ENCODE measurements at regions of chr2 and their contacts with region 1.

Region 1: GRCh38 chr2:110677530-110678456 is at the start of gene BUB1:
- DNase-seq: peak; percentile 97
- H3K4me3 Mint-ChIP-seq: peak within 1 kb of the TSS; percentile 84
- H3K27ac Mint-ChIP-seq: peak within 1 kb of the TSS; percentile 93
- H3K4me1 Mint-ChIP-seq: peaks cover 22% of the 10 kb centered on the region
- H3K27me3 Mint-ChIP-seq: no peaks in the 10 kb centered on the region
- CTCF ChIP-seq: no peak
- total RNA-seq, gene BUB1: 23.0 and 25.5 TPM in 2 replicates

Region 2: DNA sequence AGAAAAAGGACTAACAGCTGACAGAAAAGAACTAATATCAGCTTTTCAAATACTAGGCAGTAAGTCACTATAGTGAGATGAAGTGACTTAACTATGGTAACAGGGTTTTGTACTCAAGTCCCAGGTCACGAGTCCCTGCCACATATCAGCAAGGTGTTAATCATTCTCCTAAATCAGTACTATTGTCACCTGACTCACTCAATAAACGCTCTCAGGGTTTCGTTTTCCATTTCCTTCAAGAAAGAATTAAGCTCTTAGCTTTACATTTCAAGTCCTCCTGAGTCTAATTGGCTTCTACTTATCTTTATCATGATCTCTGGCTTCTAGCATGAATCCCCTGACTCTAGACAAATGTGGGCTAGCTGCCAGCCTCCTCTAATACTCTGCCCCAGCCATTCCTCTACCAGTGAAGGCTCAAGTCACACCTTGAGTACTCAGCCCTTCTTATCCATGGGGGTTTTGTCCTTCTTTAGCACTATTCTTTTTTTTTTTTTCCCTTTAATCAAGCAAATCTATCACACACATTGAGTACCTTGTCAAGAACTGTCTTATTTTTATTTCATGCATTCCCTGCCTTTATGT is 20.0 kb before region 1 on chr2:
- CTCF ChIA-PET with region 1: interaction called, 5 read pairs
- POLR2A ChIA-PET with region 1: interaction called, 10 read pairs
- intact Hi-C with region 1: no loop called
- DNase-seq: no peak
- H3K4me3 Mint-ChIP-seq: no peak overlapping the region
- H3K27ac Mint-ChIP-seq: peak overlapping the region; percentile 18
- H3K4me1 Mint-ChIP-seq: peaks cover 7% of the 10 kb centered on the region
- H3K27me3 Mint-ChIP-seq: no peaks in the 10 kb centered on the region
- CTCF ChIP-seq: no peak

Region 3: GRCh38 chr2:110755491-110756078 is 77.8 kb after region 1 on chr2:
- CTCF ChIA-PET with region 1: interaction called, 31 read pairs
- POLR2A ChIA-PET with region 1: interaction called, 9 read pairs
- intact Hi-C with region 1: loop called (anchors 1 kb)
- DNase-seq: no peak
- H3K4me3 Mint-ChIP-seq: no peak overlapping the region
- H3K27ac Mint-ChIP-seq: no peak overlapping the region
- H3K4me1 Mint-ChIP-seq: no peaks in the 10 kb centered on the region
- H3K27me3 Mint-ChIP-seq: peaks cover 23% of the 10 kb centered on the region
- CTCF ChIP-seq: peak; percentile 49

Measured in MCF 10A (cell line).